ENCODE measurements at regions of chr10 and their contacts with region 1.

Region 1: DNA sequence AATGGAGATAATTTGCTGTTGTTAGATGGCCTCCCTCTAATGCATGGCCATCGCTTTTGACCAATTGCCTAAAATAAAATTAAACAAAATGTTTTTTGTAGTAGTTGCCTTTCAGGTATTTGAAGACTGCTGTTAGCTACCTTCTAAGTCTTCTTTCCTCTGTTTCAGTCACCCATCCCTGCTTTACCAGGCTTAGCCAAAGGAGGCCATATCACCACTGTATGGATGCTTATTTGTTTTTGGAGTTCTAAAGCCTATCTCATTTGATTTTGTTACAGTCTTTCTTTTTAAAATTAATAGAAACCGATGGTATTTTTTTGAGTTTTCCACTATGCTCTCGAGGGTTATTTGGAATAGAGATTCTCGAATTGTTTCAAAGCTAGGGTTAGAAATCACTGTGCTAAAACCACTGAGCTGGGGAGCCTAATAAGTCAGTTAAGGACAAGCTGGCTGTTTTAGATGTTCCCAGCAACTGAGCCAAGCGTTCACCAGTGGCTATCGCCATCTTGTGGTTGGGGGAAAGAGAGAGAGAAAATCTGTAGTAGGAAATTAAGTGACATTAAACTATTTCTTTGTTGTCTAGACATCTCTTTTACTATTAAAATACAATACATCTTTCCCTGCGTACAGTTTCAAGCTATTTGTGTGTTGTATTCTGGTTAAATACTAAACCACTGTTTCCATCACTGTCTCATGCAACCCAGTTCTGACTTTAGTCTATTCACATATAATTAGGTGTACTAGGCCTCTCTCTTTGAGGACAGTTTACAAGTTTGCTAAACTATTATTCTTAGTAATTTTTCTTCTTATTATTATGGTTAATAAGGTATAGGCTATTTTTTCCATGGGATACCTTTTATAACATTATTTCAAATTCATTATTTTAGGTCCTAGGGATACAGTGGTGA is 52.2 kb downstream of the GPR158 start:
- DNase-seq: peak in 4 of 5 donors; percentile 21 to 24 (median 22)
- ATAC-seq: peak in 1 of 4 donors; percentile 42
- H3K4me3 ChIP-seq: no peak overlapping the region
- H3K27ac ChIP-seq: no peak overlapping the region
- H3K4me1 ChIP-seq: no peaks in the 10 kb centered on the region
- H3K27me3 ChIP-seq: no peaks in the 10 kb centered on the region
- CTCF ChIP-seq: peak; percentile 44 to 75 (median 60)
- POLR2A ChIP-seq: no peak

Region 2: GRCh38 chr10:25288181-25288580 is 61.2 kb after region 1 on chr10:
- intact Hi-C with region 1: loop called in 1 of 10 experiments (anchors 10 kb)
- DNase-seq: no peak
- ATAC-seq: no peak
- H3K4me3 ChIP-seq: no peak overlapping the region
- H3K27ac ChIP-seq: no peak overlapping the region
- H3K4me1 ChIP-seq: no peaks in the 10 kb centered on the region
- H3K27me3 ChIP-seq: no peaks in the 10 kb centered on the region
- CTCF ChIP-seq: no peak
- POLR2A ChIP-seq: no peak

Region 3: DNA sequence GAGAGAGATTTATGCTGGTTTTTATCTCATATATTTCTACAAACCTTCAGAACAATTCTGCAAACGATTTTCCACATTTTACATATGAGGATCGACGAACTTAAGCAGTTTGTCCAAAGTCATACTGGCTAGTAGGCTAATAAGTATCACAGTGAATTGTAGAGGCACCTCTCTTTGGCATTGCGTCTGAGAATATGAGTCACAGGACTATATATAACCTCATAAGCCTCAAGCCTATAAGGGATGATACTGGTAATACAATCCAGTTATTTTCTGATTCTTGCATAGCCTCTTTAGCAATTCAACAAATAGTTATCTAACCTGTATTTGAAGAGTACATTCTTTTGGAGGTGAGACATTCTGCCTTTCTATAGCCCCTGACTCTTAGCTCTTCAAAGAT is 77.6 kb after region 1 on chr10:
- intact Hi-C with region 1: no loop called
- DNase-seq: no peak
- ATAC-seq: peak; percentile 73 to 93 (median 88)
- H3K4me3 ChIP-seq: no peak overlapping the region
- H3K27ac ChIP-seq: no peak overlapping the region
- H3K4me1 ChIP-seq: peaks cover 0 to 6% (median 0%) of the 10 kb centered on the region in 12 donors
- H3K27me3 ChIP-seq: no peaks in the 10 kb centered on the region
- CTCF ChIP-seq: no peak
- POLR2A ChIP-seq: no peak